ENCODE measurements at regions of chr5 and their contacts with region 1.

Region 1: GRCh38 chr5:74903165-74903787 is 37.1 kb upstream of the FAM169A start:
- DNase-seq: peak in 2 of 10 donors; percentile 6 to 48
- H3K4me3 ChIP-seq: no peak overlapping the region
- H3K27ac ChIP-seq: no peak overlapping the region
- H3K27me3 ChIP-seq: no peaks in the 10 kb centered on the region
- CTCF ChIP-seq: peak in 46 of 56 donors; percentile 12 to 72 (median 40)

Region 2: GRCh38 chr5:74798977-74799911 is 104.0 kb before region 1 on chr5:
- intact Hi-C with region 1: loop called in 1 of 2 experiments (anchors 10 kb)
- DNase-seq: peak in 9 of 10 donors; percentile 32 to 72 (median 52)
- H3K4me3 ChIP-seq: peak overlapping the region in 48 of 59 donors; percentile 2 to 58 (median 32)
- H3K27ac ChIP-seq: peak overlapping the region; percentile 24 to 92 (median 83)
- H3K27me3 ChIP-seq: no peaks in the 10 kb centered on the region
- CTCF ChIP-seq: peak in 13 of 56 donors; percentile 3 to 47 (median 21)

Region 3: DNA sequence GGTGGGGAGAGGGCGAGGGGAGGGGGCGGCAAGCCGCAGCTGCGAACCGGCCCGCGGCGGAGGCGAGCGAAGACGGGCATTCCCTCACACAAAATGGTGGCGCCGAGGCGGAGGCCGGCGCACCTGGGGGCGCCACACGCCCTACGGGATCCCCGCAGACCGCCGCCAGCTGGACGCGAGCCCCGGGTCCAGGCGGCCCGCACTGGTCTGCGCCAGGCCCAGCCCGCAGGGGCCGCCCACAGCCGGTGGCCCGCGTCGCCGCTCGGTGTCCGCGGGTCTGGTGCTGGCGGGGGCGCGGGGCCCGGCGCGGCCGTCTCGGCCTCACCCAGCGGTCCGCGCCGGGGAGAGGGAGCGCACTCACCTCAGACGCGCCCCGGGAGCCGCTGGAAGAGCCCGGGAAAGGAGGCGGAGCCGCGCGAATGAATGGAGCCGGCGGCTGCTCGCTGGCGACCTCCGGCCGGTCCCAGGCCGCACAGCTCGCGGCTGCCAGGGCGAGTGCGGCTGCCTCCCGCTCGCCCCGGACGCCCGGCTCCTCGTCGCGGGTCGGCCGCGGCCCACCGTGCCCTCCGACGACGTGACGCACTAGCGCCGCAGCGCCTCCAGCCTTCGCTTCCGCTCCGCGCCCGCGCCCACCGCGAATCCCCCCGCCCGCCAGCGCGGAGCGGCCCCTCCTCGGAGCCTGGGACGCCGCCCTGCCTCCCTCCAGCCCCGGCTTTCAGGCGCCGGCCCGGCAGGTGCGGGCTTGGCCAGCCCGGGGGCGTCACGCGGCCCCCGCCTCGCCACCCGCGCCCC is 37.3 kb before region 1 on chr5 and contains the start of gene FAM169A:
- intact Hi-C with region 1: loop called in 1 of 2 experiments (anchors 5 kb)
- DNase-seq: peak in 5 of 10 donors; percentile 48 to 71 (median 57)
- H3K4me3 ChIP-seq: peak within 1 kb of the TSS; percentile 56 to 92 (median 80)
- H3K27ac ChIP-seq: peak within 1 kb of the TSS; percentile 43 to 96 (median 89)
- H3K27me3 ChIP-seq: no peaks in the 10 kb centered on the region
- CTCF ChIP-seq: peak in 15 of 56 donors; percentile 3 to 43 (median 12)
- total RNA-seq, gene FAM169A: 46.6 to 90.8 (median 70.1) TPM